Right ventricle myocardium inferior (tissue), 1 donor: ENCODE measurements at regions of chr2 and their contacts with region 1.

Region 1: GRCh38 chr2:59900728-59901452 is 652.6 kb downstream of the BCL11A start:
- DNase-seq: no peak
- ATAC-seq: peak; percentile 68

Region 2: GRCh38 chr2:60104514-60105505 is 203.9 kb after region 1 on chr2:
- intact Hi-C with region 1: loop called (anchors 2 kb)
- DNase-seq: no peak
- ATAC-seq: no peak